Sigmoid colon (tissue), 7 donors: ENCODE measurements at regions of chr10 and their contacts with region 1.

Region 1: GRCh38 chr10:5813287-5814109 is at the start of gene GDI2:
- DNase-seq: peak; percentile 98
- H3K4me3 ChIP-seq: peak within 1 kb of the TSS; percentile 78 to 96 (median 91)
- H3K27ac ChIP-seq: peak within 1 kb of the TSS; percentile 96 to 99 (median 98)
- H3K4me1 ChIP-seq: peaks cover 0 to 48% (median 40%) of the 10 kb centered on the region in 4 donors
- H3K27me3 ChIP-seq: no peaks in the 10 kb centered on the region
- CTCF ChIP-seq: no peak
- EP300 ChIP-seq: peak in 1 of 4 donors; percentile 7
- POLR2A ChIP-seq: peak; percentile 92 to 93
- total RNA-seq, gene GDI2: 178 to 208 (median 205) TPM

Region 2: GRCh38 chr10:5873515-5873995 is 60.1 kb after region 1 on chr10:
- intact Hi-C with region 1: loop called (anchors 1 kb)
- DNase-seq: peak; percentile 72
- H3K4me3 ChIP-seq: no peak overlapping the region
- H3K27ac ChIP-seq: no peak overlapping the region
- H3K4me1 ChIP-seq: no peaks in the 10 kb centered on the region
- H3K27me3 ChIP-seq: no peaks in the 10 kb centered on the region
- CTCF ChIP-seq: peak; percentile 63 to 73 (median 69)
- EP300 ChIP-seq: no peak
- POLR2A ChIP-seq: no peak

Region 3: DNA sequence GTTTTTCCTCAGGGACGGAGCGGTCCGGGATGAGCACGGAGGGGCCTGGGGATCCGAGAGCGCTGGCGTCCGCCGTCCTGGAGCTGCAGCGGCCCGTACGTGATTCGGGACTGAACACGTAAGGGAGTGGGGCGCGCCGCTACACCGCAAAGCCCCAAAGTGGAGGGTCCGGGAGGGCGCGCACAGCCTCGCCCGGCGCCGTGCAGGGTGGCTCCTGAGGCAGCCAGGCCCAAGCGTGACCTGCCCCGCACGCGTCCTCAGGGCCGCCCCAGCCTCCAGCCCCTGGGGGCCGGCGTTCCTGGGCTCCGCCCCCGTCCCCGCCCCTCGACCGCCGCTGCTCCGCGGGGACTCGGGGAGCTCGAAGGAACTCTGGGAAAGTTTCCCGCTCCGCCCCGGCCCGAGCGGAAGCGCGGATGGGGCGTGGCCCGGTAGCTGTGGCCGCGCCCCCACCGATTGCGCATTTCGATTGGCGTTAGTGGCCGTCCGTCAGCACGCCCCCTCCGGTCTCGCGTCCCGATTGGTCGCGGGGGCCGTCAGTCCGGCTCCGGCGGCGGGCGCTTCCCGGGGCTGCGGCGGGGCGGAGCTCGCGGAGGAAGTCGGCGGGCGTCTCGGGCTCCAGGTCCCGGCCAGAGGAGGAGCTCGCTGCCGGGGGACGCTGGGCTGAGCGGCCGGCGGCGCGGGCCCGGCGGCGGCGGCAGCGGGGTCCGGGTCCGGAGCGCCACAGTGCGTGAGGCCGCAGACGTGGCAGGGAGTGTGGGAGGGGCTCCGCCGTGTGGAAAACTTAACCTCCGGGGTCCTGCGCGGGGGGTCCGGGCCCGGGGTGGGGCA is 76.3 kb after region 1 on chr10 and contains the starts of genes ANKRD16 and FBH1:
- intact Hi-C with region 1: loop called (anchors 5 kb)
- DNase-seq: peak; percentile 99
- H3K4me3 ChIP-seq: peak within 1 kb of the TSS; percentile 82 to 91 (median 84)
- H3K27ac ChIP-seq: peak within 1 kb of the TSS; percentile 81 to 94 (median 90)
- H3K4me1 ChIP-seq: peaks cover 0 to 49% (median 43%) of the 10 kb centered on the region in 4 donors
- H3K27me3 ChIP-seq: no peaks in the 10 kb centered on the region
- CTCF ChIP-seq: no peak
- EP300 ChIP-seq: no peak
- POLR2A ChIP-seq: peak; percentile 57 to 62
- total RNA-seq, gene ANKRD16: 8.6 to 11.4 (median 9.4) TPM
- total RNA-seq, gene FBH1: 68.7 to 85.9 (median 80.4) TPM